ENCODE measurements at regions of chr4 and their contacts with region 1.

Region 1: GRCh38 chr4:74311696-74312313 is 3.5 kb downstream of the EPGN start:
- DNase-seq: no peak
- ATAC-seq: peak; percentile 67 to 84 (median 72)
- H3K4me3 ChIP-seq: no peak overlapping the region
- H3K27ac ChIP-seq: no peak overlapping the region
- H3K4me1 ChIP-seq: peaks cover 0 to 5% (median 0%) of the 10 kb centered on the region in 4 donors
- H3K27me3 ChIP-seq: no peaks in the 10 kb centered on the region
- CTCF ChIP-seq: peak; percentile 52 to 68 (median 65)
- POLR2A ChIP-seq: no peak

Region 2: GRCh38 chr4:73828956-73829355 is 482.8 kb before region 1 on chr4:
- intact Hi-C with region 1: no loop called
- DNase-seq: no peak
- ATAC-seq: no peak
- H3K4me3 ChIP-seq: no peak overlapping the region
- H3K27ac ChIP-seq: no peak overlapping the region
- H3K4me1 ChIP-seq: no peaks in the 10 kb centered on the region
- H3K27me3 ChIP-seq: no peaks in the 10 kb centered on the region
- CTCF ChIP-seq: no peak
- POLR2A ChIP-seq: no peak

Region 3: DNA sequence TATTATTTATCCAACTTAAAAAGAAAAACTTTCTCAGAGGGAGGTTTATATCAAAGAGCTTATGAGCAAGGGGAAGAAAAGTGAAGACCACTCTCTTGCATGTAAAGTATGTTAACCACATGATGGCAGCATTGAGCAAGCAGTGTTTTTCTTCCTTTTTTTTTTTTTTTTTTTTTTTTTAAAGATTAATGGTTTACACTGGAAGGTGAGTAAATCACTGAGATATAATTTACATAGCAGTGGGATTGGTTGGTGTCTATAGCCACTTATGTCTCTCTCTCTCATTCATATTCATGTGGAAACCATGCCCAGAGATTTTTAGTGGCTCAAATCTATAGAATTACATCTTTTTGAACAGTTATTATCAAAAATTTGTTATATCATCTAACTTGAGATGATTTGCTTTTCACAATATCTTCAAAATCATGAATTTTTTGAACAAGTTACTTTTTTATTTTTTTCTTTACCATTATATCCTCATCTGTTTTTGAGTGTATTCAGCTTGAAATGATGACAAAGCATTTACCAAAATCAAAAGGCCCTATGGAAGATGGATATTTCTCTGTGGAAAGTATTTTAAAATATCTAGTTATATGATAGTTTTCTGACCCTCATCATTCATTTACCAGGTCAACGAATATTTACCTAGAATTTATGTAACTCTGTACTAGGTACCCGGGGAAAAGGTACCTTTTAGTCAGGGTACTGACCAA is 122.3 kb before region 1 on chr4:
- intact Hi-C with region 1: loop called in 1 of 2 experiments (anchors 10 kb)
- DNase-seq: no peak
- ATAC-seq: peak; percentile 33 to 84 (median 62)
- H3K4me3 ChIP-seq: no peak overlapping the region
- H3K27ac ChIP-seq: no peak overlapping the region
- H3K4me1 ChIP-seq: no peaks in the 10 kb centered on the region
- H3K27me3 ChIP-seq: no peaks in the 10 kb centered on the region
- CTCF ChIP-seq: peak; percentile 43 to 76 (median 74)
- POLR2A ChIP-seq: no peak

Region 4: GRCh38 chr4:74237425-74237966 is 74.3 kb before region 1 on chr4:
- intact Hi-C with region 1: no loop called
- DNase-seq: no peak
- ATAC-seq: no peak
- H3K4me3 ChIP-seq: no peak overlapping the region
- H3K27ac ChIP-seq: no peak overlapping the region
- H3K4me1 ChIP-seq: no peaks in the 10 kb centered on the region
- H3K27me3 ChIP-seq: no peaks in the 10 kb centered on the region
- CTCF ChIP-seq: no peak
- POLR2A ChIP-seq: no peak

Measured in right lobe of liver (tissue), 6 donors.